GM12878 (cell line): ENCODE measurements at regions of chr12 and their contacts with region 1.

Region 1: DNA sequence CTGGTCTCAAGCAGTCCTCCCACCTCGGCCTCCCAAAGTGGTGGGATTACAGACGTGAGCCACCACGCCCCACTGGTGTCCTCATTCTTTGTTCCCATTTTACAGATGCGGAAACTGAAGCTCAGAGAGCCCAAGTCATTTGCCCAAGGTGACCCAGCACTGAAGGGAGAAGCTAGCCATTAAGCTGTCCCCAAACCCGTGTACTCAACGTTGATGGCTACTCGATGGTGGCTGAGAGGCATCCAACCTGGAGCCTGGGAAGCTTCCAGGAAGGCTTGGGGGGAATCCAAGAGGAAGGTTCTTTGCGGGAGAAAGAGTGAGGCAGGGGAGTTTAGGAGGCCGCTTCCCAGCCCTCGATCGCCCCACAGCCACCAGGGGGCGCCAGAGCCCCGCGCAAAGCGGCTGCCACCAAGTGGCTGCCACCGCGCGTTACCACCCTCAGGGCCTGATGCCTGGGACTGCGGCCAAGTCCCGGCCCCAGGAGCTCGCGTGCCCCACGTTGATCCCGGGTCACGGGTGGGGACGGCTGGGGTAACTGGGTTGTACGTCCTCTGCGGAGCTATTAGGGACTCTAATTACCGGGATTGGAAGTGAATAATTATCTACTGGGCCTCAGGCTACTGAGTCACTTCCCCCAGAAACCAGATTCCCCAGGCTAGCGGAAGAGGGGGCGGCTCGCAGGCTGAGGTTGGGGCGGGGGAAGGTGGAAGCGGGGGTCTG is 8.8 kb upstream of the SH2B3 start:
- DNase-seq: no peak
- ATAC-seq: peak; percentile 86
- H3K4me3 ChIP-seq: peak overlapping the region; percentile 7; the same call in 1 of the 2 replicates
- H3K27ac ChIP-seq: peak overlapping the region; percentile 61
- H3K4me1 ChIP-seq: peaks cover 38% of the 10 kb centered on the region
- H3K27me3 ChIP-seq: no peaks in the 10 kb centered on the region
- CTCF ChIP-seq: peak; percentile 97 to 99 (median 99)
- EP300 ChIP-seq: no peak
- POLR2A ChIP-seq: no peak
- RAD21 ChIP-seq: peak; percentile 92

Region 2: GRCh38 chr12:111434680-111435338 is 37.9 kb after region 1 on chr12:
- CTCF ChIA-PET with region 1: interaction called, 1,117 read pairs
- POLR2A ChIA-PET with region 1: interaction called, 4 read pairs
- RAD21 ChIA-PET with region 1: interaction called, 804 read pairs
- SMC1A ChIA-PET with region 1: interaction called, 20 read pairs
- in situ Hi-C with region 1: no loop called
- intact Hi-C with region 1: no loop called
- DNase-seq: peak; percentile 84
- ATAC-seq: peak; percentile 72
- H3K4me3 ChIP-seq: peak overlapping the region; percentile 65
- H3K27ac ChIP-seq: peak overlapping the region; percentile 95
- H3K4me1 ChIP-seq: peaks cover 91% of the 10 kb centered on the region
- H3K27me3 ChIP-seq: no peaks in the 10 kb centered on the region
- CTCF ChIP-seq: no peak
- EP300 ChIP-seq: peak; percentile 47 to 60; a peak in 3 of 4 replicates
- POLR2A ChIP-seq: peak; percentile 67
- RAD21 ChIP-seq: no peak

Region 3: GRCh38 chr12:111462210-111462769 is 65.4 kb after region 1 on chr12:
- CTCF ChIA-PET with region 1: interaction called, 1,117 read pairs
- POLR2A ChIA-PET with region 1: no interaction called
- RAD21 ChIA-PET with region 1: interaction called, 18 read pairs
- SMC1A ChIA-PET with region 1: interaction called, 605 read pairs
- in situ Hi-C with region 1: no loop called
- intact Hi-C with region 1: no loop called
- DNase-seq: no peak
- ATAC-seq: peak; percentile 80
- H3K4me3 ChIP-seq: no peak overlapping the region
- H3K27ac ChIP-seq: no peak overlapping the region
- H3K4me1 ChIP-seq: no peaks in the 10 kb centered on the region
- H3K27me3 ChIP-seq: no peaks in the 10 kb centered on the region
- CTCF ChIP-seq: no peak
- EP300 ChIP-seq: no peak
- POLR2A ChIP-seq: no peak
- RAD21 ChIP-seq: no peak

Region 4: GRCh38 chr12:111529424-111530368 is 132.8 kb after region 1 on chr12:
- CTCF ChIA-PET with region 1: interaction called, 118 read pairs
- POLR2A ChIA-PET with region 1: no interaction called
- RAD21 ChIA-PET with region 1: interaction called, 21 read pairs
- SMC1A ChIA-PET with region 1: interaction called, 64 read pairs
- in situ Hi-C with region 1: loop called (anchors 5 kb)
- intact Hi-C with region 1: loop called (anchors 1 kb)
- DNase-seq: peak; percentile 24
- ATAC-seq: peak; percentile 95
- H3K4me3 ChIP-seq: no peak overlapping the region
- H3K27ac ChIP-seq: no peak overlapping the region
- H3K4me1 ChIP-seq: no peaks in the 10 kb centered on the region
- H3K27me3 ChIP-seq: no peaks in the 10 kb centered on the region
- CTCF ChIP-seq: peak; percentile 63 to 71 (median 64)
- EP300 ChIP-seq: no peak
- POLR2A ChIP-seq: no peak
- RAD21 ChIP-seq: peak; percentile 70

Region 5: GRCh38 chr12:111578274-111578970 is 181.5 kb after region 1 on chr12:
- CTCF ChIA-PET with region 1: no interaction called
- POLR2A ChIA-PET with region 1: no interaction called
- RAD21 ChIA-PET with region 1: no interaction called
- SMC1A ChIA-PET with region 1: no interaction called
- in situ Hi-C with region 1: no loop called
- intact Hi-C with region 1: no loop called
- DNase-seq: no peak
- ATAC-seq: peak; percentile 77
- H3K4me3 ChIP-seq: no peak overlapping the region
- H3K27ac ChIP-seq: peak overlapping the region; percentile 37; the same call in 1 of the 2 replicates
- H3K4me1 ChIP-seq: peaks cover 6% of the 10 kb centered on the region
- H3K27me3 ChIP-seq: no peaks in the 10 kb centered on the region
- CTCF ChIP-seq: no peak
- EP300 ChIP-seq: no peak
- POLR2A ChIP-seq: no peak
- RAD21 ChIP-seq: no peak

Region 6: GRCh38 chr12:111788178-111788654 is 391.3 kb after region 1 on chr12:
- CTCF ChIA-PET with region 1: interaction called, 3 read pairs
- POLR2A ChIA-PET with region 1: no interaction called
- RAD21 ChIA-PET with region 1: no interaction called
- SMC1A ChIA-PET with region 1: no interaction called
- in situ Hi-C with region 1: no loop called
- intact Hi-C with region 1: loop called (anchors 10 kb)
- DNase-seq: no peak
- ATAC-seq: peak; percentile 98
- H3K4me3 ChIP-seq: no peak overlapping the region
- H3K27ac ChIP-seq: no peak overlapping the region
- H3K4me1 ChIP-seq: no peaks in the 10 kb centered on the region
- H3K27me3 ChIP-seq: no peaks in the 10 kb centered on the region
- CTCF ChIP-seq: peak; percentile 57 to 83 (median 69)
- EP300 ChIP-seq: no peak
- POLR2A ChIP-seq: no peak
- RAD21 ChIP-seq: peak; percentile 79